Calu3 (cell line): ENCODE measurements at regions of chr1 and their contacts with region 1.

Region 1: DNA sequence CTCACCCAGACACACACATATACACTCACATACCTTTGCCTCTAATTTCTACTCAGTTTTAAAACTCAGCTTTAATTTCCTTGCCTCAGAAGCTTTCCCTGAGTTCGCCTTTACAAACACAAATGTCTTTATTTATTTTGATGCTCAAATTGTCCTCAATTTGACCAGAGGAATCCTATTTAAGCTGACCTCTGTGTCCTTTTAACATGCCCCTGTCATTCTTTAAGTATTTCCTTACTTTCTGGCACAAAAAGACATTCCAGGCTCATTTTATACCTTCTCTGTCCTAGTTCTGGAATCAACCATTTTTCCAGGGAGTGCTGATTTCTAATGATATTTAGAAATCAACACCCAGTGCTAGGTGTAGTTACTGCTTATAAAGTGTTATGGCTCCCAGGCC is 82.5 kb downstream of the OSBPL9 start:
- DNase-seq: no peak
- H3K4me3 Mint-ChIP-seq: no peak overlapping the region
- H3K27ac Mint-ChIP-seq: no peak overlapping the region
- H3K4me1 Mint-ChIP-seq: peaks cover 16% of the 10 kb centered on the region
- H3K27me3 Mint-ChIP-seq: no peaks in the 10 kb centered on the region
- CTCF ChIP-seq: no peak

Region 2: DNA sequence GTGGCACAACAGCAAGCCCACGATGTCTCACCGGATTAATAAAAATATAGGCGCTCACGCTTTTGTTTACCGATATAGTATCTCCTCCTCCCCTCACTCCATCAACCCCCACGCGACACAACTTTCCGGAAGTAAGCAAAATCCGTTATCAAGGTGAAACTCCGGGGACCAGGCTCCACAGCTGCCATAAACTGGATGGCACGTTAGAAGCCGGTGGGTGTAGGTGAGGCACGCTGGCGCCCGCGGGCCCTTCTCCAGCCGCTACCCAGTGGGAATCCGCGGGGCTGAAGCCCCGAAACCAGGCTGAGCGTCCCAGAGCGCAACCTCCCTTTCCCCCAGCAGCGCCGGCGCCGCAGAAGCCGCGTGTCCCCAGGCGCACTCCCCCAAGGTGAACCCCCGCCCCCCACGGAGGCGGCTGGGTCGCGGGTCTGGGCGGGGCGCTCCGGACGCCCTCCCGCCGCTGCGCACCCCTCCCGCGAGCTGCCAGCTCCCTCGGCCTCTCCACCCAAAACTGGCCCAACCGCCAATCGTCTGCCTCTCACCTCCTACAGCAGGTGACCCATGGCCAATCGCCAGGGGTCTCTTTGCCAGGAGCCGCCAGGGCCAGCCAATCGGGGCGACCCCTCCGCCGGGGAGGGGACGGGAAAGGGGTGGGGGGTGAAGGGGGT is 29.9 kb after region 1 on chr1:
- CTCF ChIA-PET with region 1: interaction called, 12 read pairs
- intact Hi-C with region 1: no loop called
- DNase-seq: peak; percentile 97
- H3K4me3 Mint-ChIP-seq: peak overlapping the region; percentile 83
- H3K27ac Mint-ChIP-seq: peak overlapping the region; percentile 1
- H3K4me1 Mint-ChIP-seq: peaks cover 34% of the 10 kb centered on the region
- H3K27me3 Mint-ChIP-seq: no peaks in the 10 kb centered on the region
- CTCF ChIP-seq: no peak